Right cardiac atrium (tissue), 5 donors: ENCODE measurements at regions of chr11 and their contacts with region 1.

Region 1: DNA sequence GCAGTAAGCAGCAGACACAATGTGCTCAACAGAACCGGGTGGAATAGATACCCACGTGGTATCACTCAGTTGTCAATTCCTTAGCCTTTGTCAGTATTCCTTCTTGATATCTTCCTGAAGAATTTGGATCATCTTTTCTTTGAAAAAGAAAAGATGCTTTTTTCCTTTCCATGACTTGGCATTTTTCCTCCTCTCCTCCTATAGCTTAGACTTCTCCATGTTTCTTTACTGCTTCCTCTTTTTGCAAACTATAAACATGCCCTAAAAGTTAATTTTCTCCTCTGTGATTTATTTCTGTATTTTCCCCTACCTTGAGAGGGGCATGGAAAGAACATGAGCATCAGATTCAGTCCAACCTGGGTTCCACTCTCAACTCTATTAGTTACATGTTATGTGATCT is 11.7 kb downstream of the CBLIF start:
- DNase-seq: no peak
- ATAC-seq: no peak
- H3K4me3 ChIP-seq: no peak overlapping the region
- H3K27ac ChIP-seq: no peak overlapping the region
- H3K4me1 ChIP-seq: no peaks in the 10 kb centered on the region
- H3K27me3 ChIP-seq: no peaks in the 10 kb centered on the region

Region 2: GRCh38 chr11:58549644-58550043 is 1284.0 kb before region 1 on chr11:
- intact Hi-C with region 1: no loop called
- DNase-seq: no peak
- ATAC-seq: peak; percentile 70 to 88
- H3K4me3 ChIP-seq: no peak overlapping the region
- H3K27ac ChIP-seq: no peak overlapping the region
- H3K4me1 ChIP-seq: no peaks in the 10 kb centered on the region
- H3K27me3 ChIP-seq: no peaks in the 10 kb centered on the region

Region 3: DNA sequence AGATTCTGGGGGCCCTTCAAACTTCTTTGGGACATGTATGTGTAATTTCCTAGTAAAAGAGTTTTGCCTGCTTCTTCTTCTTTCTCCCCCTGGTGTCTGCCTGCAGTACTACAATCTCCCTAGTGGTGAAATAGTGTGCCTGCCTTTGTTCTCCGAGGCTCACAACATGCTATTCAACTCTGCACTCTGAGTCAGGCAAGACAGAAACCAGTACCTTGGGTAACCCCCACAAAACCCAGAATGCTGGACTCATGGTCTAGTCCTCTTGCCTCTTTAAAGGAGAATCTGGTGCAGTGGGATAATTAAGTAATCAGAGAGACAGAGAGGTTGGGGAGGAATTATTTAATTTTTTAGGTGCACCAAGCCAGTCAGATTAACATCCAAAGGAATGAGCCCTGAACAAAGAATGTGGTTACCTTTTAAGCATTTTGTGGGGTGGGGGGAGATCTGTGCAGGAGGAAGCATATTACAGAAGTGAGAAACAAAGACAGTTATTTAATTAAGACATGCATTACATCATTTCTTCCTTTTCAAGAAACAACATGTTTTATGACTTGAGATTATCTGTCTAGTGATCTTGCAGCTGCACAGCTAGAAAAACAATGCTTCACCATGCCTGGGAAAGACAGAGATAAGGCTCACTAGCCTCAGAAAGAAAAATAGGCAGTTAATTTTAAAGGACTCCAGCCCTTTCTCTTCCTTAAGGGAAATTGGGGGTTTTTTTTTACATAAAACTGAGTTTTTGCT is 360.3 kb after region 1 on chr11:
- intact Hi-C with region 1: loop called in 1 of 4 experiments (anchors 10 kb)
- DNase-seq: peak in 2 of 3 donors; percentile 26 to 44
- ATAC-seq: peak; percentile 72 to 89
- H3K4me3 ChIP-seq: no peak overlapping the region
- H3K27ac ChIP-seq: no peak overlapping the region
- H3K4me1 ChIP-seq: no peaks in the 10 kb centered on the region
- H3K27me3 ChIP-seq: no peaks in the 10 kb centered on the region